ENCODE measurements at regions of chr3 and their contacts with region 1.

Region 1: GRCh38 chr3:36993326-36994283 is at the start of gene MLH1:
- DNase-seq: peak; percentile 100
- H3K4me3 ChIP-seq: peak within 1 kb of the TSS; percentile 32 to 89 (median 76)
- H3K27ac ChIP-seq: peak within 1 kb of the TSS; percentile 97
- H3K4me1 ChIP-seq: peaks cover 43% of the 10 kb centered on the region
- H3K27me3 ChIP-seq: no peaks in the 10 kb centered on the region
- CTCF ChIP-seq: no peak
- POLR2A ChIP-seq: peak; percentile 91
- total RNA-seq, gene MLH1: 30.1 and 32.9 TPM in 2 replicates

Region 2: DNA sequence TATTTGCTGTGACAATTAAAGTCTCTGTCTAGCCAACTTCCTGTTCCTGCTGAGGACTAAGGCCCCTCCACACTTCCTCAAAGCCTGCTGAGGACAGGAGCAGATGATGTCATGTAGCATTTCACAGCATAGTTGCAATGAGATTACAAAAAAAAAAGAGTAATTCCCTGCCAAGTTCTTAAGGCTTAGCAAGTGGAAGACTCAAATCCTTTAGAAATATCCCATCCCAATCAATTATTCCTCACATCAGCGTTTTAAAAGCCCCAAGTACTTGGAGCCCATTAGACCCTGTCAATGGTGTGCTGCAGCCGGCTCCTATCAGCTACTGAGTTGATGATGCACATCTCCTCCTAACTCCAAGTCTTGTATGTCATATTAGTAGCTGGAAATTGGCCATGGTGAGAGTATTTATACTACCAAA is 100.5 kb before region 1 on chr3:
- CTCF ChIA-PET with region 1: no interaction called
- POLR2A ChIA-PET with region 1: no interaction called
- dilution Hi-C with region 1: no loop called
- intact Hi-C with region 1: no loop called
- DNase-seq: peak; percentile 62
- H3K4me3 ChIP-seq: no peak overlapping the region
- H3K27ac ChIP-seq: peak overlapping the region; percentile 31
- H3K4me1 ChIP-seq: peaks cover 9% of the 10 kb centered on the region
- H3K27me3 ChIP-seq: no peaks in the 10 kb centered on the region
- CTCF ChIP-seq: no peak
- POLR2A ChIP-seq: no peak

Region 3: GRCh38 chr3:36944012-36944640 is 49.5 kb before region 1 on chr3:
- CTCF ChIA-PET with region 1: no interaction called
- POLR2A ChIA-PET with region 1: no interaction called
- dilution Hi-C with region 1: no loop called
- intact Hi-C with region 1: loop called (anchors 2 kb)
- DNase-seq: peak; percentile 61
- H3K4me3 ChIP-seq: peak overlapping the region; percentile 56 to 85 (median 69)
- H3K27ac ChIP-seq: no peak overlapping the region
- H3K4me1 ChIP-seq: peaks cover 12% of the 10 kb centered on the region
- H3K27me3 ChIP-seq: no peaks in the 10 kb centered on the region
- CTCF ChIP-seq: no peak
- POLR2A ChIP-seq: no peak

Region 4: DNA sequence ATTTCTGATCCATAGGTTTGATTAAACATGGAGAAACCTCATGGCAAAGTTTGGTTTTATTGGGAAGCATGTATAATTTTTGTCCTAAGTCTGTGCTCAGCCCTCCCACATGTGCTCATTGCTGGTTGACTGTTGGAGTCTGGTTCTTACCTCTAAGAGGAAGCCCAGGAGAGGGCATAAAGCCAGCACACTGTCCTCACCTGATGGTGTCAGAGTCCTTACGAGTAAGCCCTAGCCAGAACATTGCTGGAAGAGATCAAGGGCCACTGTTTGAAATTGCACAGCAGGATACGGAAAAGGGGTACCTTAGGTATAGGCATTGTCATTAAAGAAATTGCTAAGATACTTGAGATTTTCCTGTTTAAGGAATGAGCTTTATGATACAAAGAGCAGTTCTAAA is 21.0 kb after region 1 on chr3:
- CTCF ChIA-PET with region 1: no interaction called
- POLR2A ChIA-PET with region 1: no interaction called
- dilution Hi-C with region 1: no loop called
- intact Hi-C with region 1: no loop called
- DNase-seq: no peak
- H3K4me3 ChIP-seq: no peak overlapping the region
- H3K27ac ChIP-seq: no peak overlapping the region
- H3K4me1 ChIP-seq: no peaks in the 10 kb centered on the region
- H3K27me3 ChIP-seq: no peaks in the 10 kb centered on the region
- CTCF ChIP-seq: no peak
- POLR2A ChIP-seq: no peak

Region 5: DNA sequence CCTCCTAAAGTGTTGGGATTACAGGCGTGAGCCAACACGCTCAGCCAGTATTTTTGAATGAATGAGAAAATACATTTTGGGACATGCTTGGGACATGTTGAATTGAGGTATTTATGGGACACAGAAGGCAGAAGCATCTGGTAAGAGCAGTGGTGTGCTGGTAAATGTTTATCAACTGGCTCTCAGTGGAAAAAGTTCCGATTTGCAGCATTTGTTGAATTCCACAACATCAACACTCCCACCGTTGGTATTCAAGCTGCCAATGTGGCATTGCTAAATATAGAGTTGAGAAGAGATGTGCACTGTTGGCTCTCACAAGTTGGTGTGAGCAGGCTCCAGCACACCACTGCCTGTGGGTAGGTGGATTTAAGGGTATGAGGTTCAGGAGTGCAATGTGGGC is 216.6 kb after region 1 on chr3:
- CTCF ChIA-PET with region 1: interaction called, 4 read pairs
- POLR2A ChIA-PET with region 1: no interaction called
- dilution Hi-C with region 1: no loop called
- intact Hi-C with region 1: loop called (anchors 1 kb)
- DNase-seq: no peak
- H3K4me3 ChIP-seq: no peak overlapping the region
- H3K27ac ChIP-seq: no peak overlapping the region
- H3K4me1 ChIP-seq: no peaks in the 10 kb centered on the region
- H3K27me3 ChIP-seq: no peaks in the 10 kb centered on the region
- CTCF ChIP-seq: no peak
- POLR2A ChIP-seq: no peak

Region 6: DNA sequence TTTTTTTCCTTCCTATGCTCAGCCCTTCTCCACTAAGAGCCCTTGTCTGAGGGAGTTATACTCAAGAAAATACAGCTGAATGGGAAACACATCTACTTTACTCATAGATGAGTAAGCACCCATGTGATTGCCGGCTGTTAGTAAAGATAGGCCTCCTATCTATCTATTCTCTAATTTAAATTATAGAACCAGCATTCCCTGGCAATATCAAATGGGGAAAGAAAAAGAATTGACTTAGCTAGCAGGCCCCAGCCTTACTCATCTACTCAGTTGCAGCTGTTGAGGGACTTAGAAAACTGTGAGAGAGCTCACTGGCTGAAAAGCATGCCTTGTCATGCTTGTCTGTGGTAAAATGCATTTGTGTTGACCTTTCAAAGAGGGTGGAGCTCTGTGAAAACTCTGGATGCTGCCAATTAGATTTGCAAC is 297.7 kb after region 1 on chr3:
- CTCF ChIA-PET with region 1: no interaction called
- POLR2A ChIA-PET with region 1: no interaction called
- dilution Hi-C with region 1: no loop called
- intact Hi-C with region 1: loop called (anchors 2 kb)
- DNase-seq: peak; percentile 34
- H3K4me3 ChIP-seq: no peak overlapping the region
- H3K27ac ChIP-seq: peak overlapping the region; percentile 11
- H3K4me1 ChIP-seq: peaks cover 26% of the 10 kb centered on the region
- H3K27me3 ChIP-seq: no peaks in the 10 kb centered on the region
- CTCF ChIP-seq: no peak
- POLR2A ChIP-seq: no peak

Region 7: GRCh38 chr3:37945807-37946530 is 952.4 kb after region 1 on chr3:
- CTCF ChIA-PET with region 1: no interaction called
- POLR2A ChIA-PET with region 1: no interaction called
- dilution Hi-C with region 1: no loop called
- intact Hi-C with region 1: loop called (anchors 5 kb)
- DNase-seq: peak; percentile 87
- H3K4me3 ChIP-seq: no peak overlapping the region
- H3K27ac ChIP-seq: peak overlapping the region; percentile 16
- H3K4me1 ChIP-seq: peaks cover 27% of the 10 kb centered on the region
- H3K27me3 ChIP-seq: no peaks in the 10 kb centered on the region
- CTCF ChIP-seq: no peak
- POLR2A ChIP-seq: peak; percentile 35